Activated T-helper 1 cell treated with anti-CD3 and anti-CD28 coated beads, Interleukin-12 subunit alpha, Interleukin-12 subunit beta, Interleukin-2, Interleukin-4 antibody, amounts not matched to agents 30 ng/mL and 10 ng/mL and 1 ng/mL, durations not matched to agents 14 hours and 24 hours and 36 hours (primary cell): ENCODE measurements at regions of chr10 and their contacts with region 1.

Region 1: GRCh38 chr10:62268399-62269114 is at the start of gene RTKN2:
- DNase-seq: peak; percentile 75
- H3K4me3 Mint-ChIP-seq: peak within 1 kb of the TSS; percentile 83
- H3K27ac Mint-ChIP-seq: no peak within 1 kb of the TSS
- H3K4me1 Mint-ChIP-seq: peaks cover 32% of the 10 kb centered on the region
- H3K27me3 Mint-ChIP-seq: peaks cover 27% of the 10 kb centered on the region
- total RNA-seq, gene RTKN2: 3.0 and 3.7 TPM in 2 replicates

Region 2: DNA sequence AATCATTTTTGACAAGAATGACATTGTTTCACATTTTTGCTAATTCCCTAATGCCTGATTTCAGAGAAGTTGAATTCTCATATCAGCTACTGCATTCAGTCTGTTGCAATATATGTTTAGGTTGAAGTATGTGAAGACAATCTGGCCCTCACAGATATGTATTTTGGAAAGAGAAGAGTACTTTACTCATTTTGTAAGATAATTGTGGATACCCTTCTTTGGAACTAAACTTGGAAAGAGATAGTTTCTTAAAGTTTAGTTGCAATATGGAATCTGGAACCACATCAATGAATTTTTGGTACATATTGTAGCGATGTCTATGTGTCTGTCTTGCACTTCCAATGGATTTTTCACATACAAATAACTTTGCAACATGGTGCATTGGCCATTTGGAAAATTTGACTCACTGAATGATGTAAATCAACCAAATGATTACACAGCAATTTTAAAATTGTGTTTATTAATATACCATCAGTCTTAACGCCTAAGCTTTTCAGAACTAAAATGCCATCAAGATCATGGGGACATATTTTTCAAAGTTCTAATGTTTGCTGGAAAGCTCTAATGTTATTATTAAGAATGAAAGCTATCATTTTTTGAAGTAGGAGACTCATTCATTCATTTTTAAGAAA is 776.1 kb before region 1 on chr10:
- intact Hi-C with region 1: no loop called
- DNase-seq: no peak
- H3K4me3 Mint-ChIP-seq: no peak overlapping the region
- H3K27ac Mint-ChIP-seq: no peak overlapping the region
- H3K4me1 Mint-ChIP-seq: no peaks in the 10 kb centered on the region
- H3K27me3 Mint-ChIP-seq: no peaks in the 10 kb centered on the region

Region 3: GRCh38 chr10:61750929-61751471 is 517.6 kb before region 1 on chr10:
- intact Hi-C with region 1: loop called (anchors 5 kb)
- DNase-seq: peak; percentile 53
- H3K4me3 Mint-ChIP-seq: no peak overlapping the region
- H3K27ac Mint-ChIP-seq: peak overlapping the region; percentile 35
- H3K4me1 Mint-ChIP-seq: peaks cover 23% of the 10 kb centered on the region
- H3K27me3 Mint-ChIP-seq: no peaks in the 10 kb centered on the region

Region 4: DNA sequence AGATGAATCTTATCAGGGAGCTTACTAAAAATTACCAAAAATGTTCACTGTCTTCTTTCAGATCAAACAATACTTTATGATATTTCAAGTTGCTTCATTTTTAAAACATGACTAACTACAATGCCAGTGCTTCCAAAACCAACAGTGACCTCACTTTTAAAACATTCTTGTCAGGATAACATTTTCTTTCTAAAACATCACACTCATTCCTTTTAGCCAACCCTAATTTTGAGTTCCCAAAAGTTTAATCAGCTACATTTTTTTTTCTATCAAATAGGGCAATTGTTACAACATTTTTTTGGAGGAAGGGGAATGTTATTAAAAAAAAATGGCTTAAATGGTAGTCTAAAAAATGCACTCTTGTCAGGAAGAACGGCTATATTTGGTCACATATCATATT is 37.2 kb before region 1 on chr10:
- intact Hi-C with region 1: no loop called
- DNase-seq: no peak
- H3K4me3 Mint-ChIP-seq: no peak overlapping the region
- H3K27ac Mint-ChIP-seq: no peak overlapping the region
- H3K4me1 Mint-ChIP-seq: peaks cover 15% of the 10 kb centered on the region
- H3K27me3 Mint-ChIP-seq: no peaks in the 10 kb centered on the region

Region 5: DNA sequence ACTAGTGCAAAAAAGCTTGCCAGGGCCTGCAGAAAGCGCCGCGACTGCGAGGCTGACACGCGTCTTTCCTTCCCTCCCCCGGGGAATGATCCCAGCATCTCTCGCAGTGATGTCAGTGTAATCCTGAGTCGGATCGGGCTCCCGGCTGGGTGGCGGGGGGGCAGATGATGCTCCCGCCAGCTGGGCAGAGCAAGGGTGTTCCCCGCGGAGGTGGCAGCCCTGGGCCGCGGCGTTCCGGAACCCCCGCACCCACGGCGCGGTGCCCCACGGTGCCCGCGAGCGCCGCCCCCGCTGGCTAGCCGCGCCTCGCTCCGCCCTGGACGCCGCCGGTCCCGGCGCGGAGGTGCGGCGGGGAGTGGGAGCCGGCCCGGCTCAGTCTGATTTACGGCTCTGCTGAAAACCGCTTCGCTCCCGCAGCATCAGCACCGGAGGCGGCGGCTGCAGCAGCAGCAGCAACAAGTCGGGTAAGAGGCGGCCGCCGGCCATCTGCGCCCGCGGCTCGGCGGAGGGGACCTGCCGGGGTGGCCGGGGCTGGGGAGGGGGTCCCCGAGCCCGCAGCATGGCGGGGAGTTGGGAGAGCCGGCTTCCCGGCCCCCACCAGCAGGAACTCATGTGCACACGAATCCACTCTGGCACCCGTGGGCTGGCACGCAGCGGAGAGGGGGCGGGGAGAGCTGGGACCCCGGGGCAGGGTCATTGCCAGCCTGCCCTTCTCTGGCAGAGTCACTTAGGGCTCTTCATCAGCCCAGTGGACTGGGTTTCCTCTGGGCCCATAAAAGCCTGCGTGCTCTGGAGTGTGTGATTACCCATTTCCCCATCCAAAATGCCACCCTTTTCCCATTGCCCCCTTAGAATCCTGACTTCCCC is 105.7 kb after region 1 on chr10 and contains the start of gene ZNF365:
- intact Hi-C with region 1: loop called (anchors 10 kb)
- DNase-seq: peak; percentile 11
- H3K4me3 Mint-ChIP-seq: peak within 1 kb of the TSS; percentile 79
- H3K27ac Mint-ChIP-seq: no peak within 1 kb of the TSS
- H3K4me1 Mint-ChIP-seq: peaks cover 11% of the 10 kb centered on the region
- H3K27me3 Mint-ChIP-seq: peaks cover 46% of the 10 kb centered on the region
- total RNA-seq, gene ZNF365: not detected in 2 replicates

Region 6: GRCh38 chr10:62426086-62426485 is 157.5 kb after region 1 on chr10:
- intact Hi-C with region 1: loop called (anchors 5 kb)
- DNase-seq: no peak
- H3K4me3 Mint-ChIP-seq: no peak overlapping the region
- H3K27ac Mint-ChIP-seq: no peak overlapping the region
- H3K4me1 Mint-ChIP-seq: peaks cover 9% of the 10 kb centered on the region
- H3K27me3 Mint-ChIP-seq: peaks cover 2% of the 10 kb centered on the region

Region 7: DNA sequence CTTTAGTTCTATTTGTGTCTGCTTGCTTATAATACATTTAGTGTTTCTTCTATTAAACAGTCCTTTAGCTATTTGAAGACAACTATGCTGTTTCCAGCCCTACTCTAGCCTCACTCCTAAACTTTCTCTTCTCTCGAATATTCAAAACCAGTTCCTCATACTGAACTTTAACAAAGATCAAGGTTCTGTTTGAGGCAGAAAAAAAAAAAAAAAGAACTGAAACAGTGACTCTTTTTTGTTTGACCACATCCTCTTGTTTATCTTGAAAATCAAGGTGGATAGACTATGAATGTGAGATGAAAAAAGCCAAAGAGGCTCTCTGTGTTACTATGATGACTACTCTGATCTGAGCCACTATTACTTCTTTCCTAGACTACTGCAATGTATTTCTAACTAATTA is 259.9 kb after region 1 on chr10:
- intact Hi-C with region 1: loop called (anchors 5 kb)
- DNase-seq: no peak
- H3K4me3 Mint-ChIP-seq: no peak overlapping the region
- H3K27ac Mint-ChIP-seq: peak overlapping the region; percentile 1
- H3K4me1 Mint-ChIP-seq: peaks cover 33% of the 10 kb centered on the region
- H3K27me3 Mint-ChIP-seq: peaks cover 9% of the 10 kb centered on the region